ENCODE measurements at regions of chr5 and their contacts with region 1.

Region 1: GRCh38 chr5:172479044-172479783 is 24.9 kb upstream of the SH3PXD2B start:
- DNase-seq: peak; percentile 79
- H3K4me3 ChIP-seq: no peak overlapping the region
- H3K27ac ChIP-seq: no peak overlapping the region
- H3K4me1 ChIP-seq: no peaks in the 10 kb centered on the region
- H3K27me3 ChIP-seq: no peaks in the 10 kb centered on the region
- CTCF ChIP-seq: peak; percentile 90 to 95

Region 2: GRCh38 chr5:172559004-172559932 is 80.1 kb after region 1 on chr5:
- CTCF ChIA-PET with region 1: no interaction called
- dilution Hi-C with region 1: loop called (anchors 5 kb)
- in situ Hi-C with region 1: no loop called
- intact Hi-C with region 1: loop called (anchors 1 kb)
- DNase-seq: peak; percentile 98
- H3K4me3 ChIP-seq: peak overlapping the region in 2 of 3 experiments; percentile 17 to 28
- H3K27ac ChIP-seq: peak overlapping the region; percentile 51
- H3K4me1 ChIP-seq: peaks cover 25% of the 10 kb centered on the region
- H3K27me3 ChIP-seq: peaks cover 2% of the 10 kb centered on the region
- CTCF ChIP-seq: no peak

Region 3: DNA sequence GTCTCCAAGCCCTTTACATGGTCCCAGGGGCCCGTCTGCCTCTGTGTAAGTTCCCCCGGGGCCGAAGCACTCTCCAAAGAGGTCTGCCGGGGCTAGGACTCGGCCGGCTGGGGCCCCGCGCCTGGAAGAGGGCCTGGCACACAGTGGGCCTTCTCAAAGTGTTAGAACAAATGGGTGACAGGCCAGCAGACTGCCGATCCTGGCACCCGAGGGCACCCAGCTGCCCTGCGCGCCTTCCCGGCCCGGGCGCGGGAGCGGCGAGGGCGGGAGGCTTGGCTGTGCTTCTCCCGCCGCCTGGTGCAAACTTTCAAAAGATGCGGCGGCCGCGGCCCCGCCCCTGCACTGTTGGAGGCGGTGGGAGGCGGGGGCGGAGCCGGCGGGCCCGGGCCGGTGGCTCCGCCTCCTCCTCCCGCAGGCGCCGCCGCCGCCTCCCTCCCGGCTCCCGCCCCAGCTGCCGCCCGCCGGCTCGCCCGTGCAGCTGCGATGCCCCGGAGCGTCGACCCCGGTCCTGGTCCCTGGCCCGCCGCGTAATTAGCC is 161.7 kb after region 1 on chr5 and contains the start of gene NEURL1B:
- CTCF ChIA-PET with region 1: no interaction called
- dilution Hi-C with region 1: no loop called
- in situ Hi-C with region 1: no loop called
- intact Hi-C with region 1: loop called (anchors 1 kb)
- DNase-seq: peak; percentile 66
- H3K4me3 ChIP-seq: peak within 1 kb of the TSS; percentile 45 to 62 (median 57)
- H3K27ac ChIP-seq: peak within 1 kb of the TSS; percentile 8
- H3K4me1 ChIP-seq: peaks cover 27% of the 10 kb centered on the region
- H3K27me3 ChIP-seq: no peaks in the 10 kb centered on the region
- CTCF ChIP-seq: peak in 1 of 2 donors; percentile 19
- total RNA-seq, gene NEURL1B: 0.50 to 2.9 TPM

Region 4: DNA sequence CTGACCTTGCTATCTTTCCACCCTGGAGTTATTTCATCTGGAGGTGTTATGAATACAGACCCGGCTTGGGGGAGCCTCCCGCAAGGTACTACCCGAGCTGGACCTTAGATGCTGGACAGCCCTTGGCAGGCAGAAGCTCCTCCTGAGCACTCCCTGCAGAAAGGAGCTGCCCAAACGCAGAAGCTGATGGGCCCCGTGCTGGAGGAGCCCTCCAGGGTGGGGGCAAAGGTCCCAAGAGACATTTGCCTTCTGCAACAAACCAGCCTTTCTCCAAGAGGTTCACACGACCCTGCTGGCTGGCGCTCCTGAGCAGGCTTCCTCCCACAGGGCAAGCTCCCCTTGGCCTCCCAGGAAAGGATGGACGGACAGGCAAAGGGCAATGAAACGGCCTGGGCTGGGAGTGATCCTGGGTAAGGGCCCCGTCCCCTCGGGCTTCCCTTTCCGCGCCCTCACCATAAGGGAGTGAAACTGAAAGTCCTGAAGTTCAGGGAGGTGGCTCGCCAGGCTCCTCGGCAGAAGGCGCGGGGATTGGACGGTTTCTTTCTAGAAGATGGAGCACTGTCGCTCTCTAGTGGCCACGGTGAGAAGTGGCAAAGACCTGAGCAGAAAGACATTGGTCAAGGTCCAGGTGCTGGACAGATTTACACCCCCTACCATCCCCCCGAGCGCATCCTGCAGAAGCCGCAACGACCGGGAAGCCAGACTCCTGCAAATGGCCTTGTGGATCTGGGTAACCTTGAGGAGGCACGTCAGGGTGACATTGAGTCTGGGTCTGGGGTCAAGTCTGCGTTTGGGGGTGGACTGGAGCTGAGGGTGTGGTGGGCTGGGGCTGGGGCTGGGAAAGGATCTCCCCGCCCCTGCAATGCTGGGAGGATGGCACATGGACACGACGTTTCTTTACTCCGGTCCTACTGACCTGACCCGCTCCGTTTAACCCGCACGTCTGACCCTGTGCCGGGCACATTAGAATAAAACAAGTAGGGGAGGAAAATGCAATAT is 218.2 kb after region 1 on chr5:
- CTCF ChIA-PET with region 1: interaction called, 11 read pairs
- dilution Hi-C with region 1: loop called (anchors 5 kb)
- in situ Hi-C with region 1: loop called (anchors 5 kb)
- intact Hi-C with region 1: loop called (anchors 1 kb)
- DNase-seq: peak; percentile 70
- H3K4me3 ChIP-seq: peak overlapping the region; percentile 42 to 65 (median 62)
- H3K27ac ChIP-seq: no peak overlapping the region
- H3K4me1 ChIP-seq: peaks cover 5% of the 10 kb centered on the region
- H3K27me3 ChIP-seq: peaks cover 2% of the 10 kb centered on the region
- CTCF ChIP-seq: peak; percentile 80 to 88

Region 5: GRCh38 chr5:172958331-172959046 is 479.3 kb after region 1 on chr5:
- CTCF ChIA-PET with region 1: no interaction called
- dilution Hi-C with region 1: no loop called
- in situ Hi-C with region 1: no loop called
- intact Hi-C with region 1: loop called (anchors 10 kb)
- DNase-seq: peak; percentile 37
- H3K4me3 ChIP-seq: peak overlapping the region; percentile 75 to 100 (median 98)
- H3K27ac ChIP-seq: peak overlapping the region; percentile 86
- H3K4me1 ChIP-seq: peaks cover 22% of the 10 kb centered on the region
- H3K27me3 ChIP-seq: no peaks in the 10 kb centered on the region
- CTCF ChIP-seq: no peak

Measured in mammary epithelial cell (primary cell).